ENCODE measurements at regions of chr2 and their contacts with region 1.

Region 1: GRCh38 chr2:19362755-19363473 is 4.5 kb upstream of the OSR1 start:
- DNase-seq: peak; percentile 65
- CTCF ChIP-seq: peak; percentile 63

Region 2: GRCh38 chr2:18520451-18521425 is 842.2 kb before region 1 on chr2:
- in situ Hi-C with region 1: loop called (anchors 25 kb)
- DNase-seq: peak; percentile 55
- CTCF ChIP-seq: peak; percentile 84

Region 3: DNA sequence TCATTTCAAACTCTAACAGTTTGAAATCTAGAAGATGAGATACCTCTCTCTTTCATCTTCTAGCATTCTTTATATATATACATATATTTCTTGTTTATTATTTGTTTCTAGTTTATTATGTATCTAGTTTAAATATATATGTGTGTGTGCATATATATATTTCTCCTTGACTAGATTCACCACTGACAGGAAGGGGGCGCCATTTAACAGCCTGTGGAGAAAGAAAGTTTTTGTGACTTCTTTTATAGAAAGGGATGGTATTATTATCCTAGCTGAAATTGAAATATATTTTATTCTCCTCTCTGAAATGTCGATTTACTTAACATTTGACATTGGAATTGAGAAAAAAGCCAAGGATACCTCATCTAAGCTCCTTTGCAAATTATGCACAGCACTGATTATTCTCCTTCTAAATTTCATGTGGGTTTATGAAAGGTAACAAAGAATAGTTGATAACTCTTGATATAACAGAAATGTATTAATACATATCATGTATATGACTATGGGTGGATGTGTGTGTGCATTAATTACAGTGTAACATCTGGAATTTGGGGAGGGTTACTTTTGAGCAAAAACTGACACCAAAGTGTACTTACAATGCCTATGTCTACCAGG is 612.9 kb before region 1 on chr2:
- in situ Hi-C with region 1: loop called (anchors 25 kb)
- DNase-seq: peak; percentile 9
- CTCF ChIP-seq: peak; percentile 76

Region 4: GRCh38 chr2:19623488-19623887 is 260.6 kb after region 1 on chr2:
- in situ Hi-C with region 1: no loop called
- DNase-seq: no peak
- CTCF ChIP-seq: no peak